ENCODE measurements at regions of chr7 and their contacts with region 1.

Region 1: DNA sequence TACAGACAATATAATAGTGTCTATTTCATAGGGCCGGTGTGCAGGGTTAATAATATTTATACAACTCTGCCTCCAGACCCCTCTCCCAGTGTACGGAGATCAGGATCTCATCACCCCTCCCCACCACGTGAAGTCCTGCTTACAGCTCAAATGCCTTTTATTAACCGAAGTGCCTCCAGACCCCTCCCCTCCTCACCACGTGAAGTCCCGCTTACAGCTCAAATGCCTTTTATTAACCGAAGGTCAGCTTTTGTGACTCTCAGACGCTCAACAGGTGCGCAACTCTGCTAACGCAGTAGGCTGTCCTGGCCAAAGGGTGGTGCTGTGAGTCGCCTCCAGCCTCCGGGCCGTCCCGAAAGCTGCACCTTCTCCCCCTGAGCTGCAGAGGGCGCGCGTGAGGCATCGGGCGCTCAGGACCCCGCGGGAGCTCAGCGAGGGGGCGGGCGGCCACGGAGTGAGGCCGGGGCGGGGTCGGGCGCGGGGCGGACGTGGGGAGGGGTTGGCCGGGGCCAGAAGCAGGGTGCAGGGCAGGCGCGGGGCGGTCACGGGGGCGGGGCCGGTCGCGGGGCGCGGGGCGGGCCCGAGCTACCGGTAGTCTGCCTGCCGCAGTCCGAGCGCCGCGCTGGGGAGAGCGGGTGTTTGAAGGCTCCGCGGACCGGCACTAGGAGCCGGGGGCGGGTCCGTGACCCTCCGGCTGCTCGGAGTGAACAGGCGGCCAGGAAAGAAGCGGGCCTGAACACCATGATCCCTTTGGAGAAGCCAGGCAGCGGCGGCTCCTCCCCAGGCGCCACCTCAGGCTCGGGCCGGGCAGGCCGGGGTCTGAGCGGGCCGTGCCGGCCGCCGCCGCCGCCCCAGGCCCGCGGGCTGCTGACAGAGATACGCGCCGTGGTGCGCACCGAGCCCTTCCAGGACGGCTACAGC is at the start of gene STK17A:
- DNase-seq: peak; percentile 93
- ATAC-seq: peak; percentile 85
- H3K4me3 Mint-ChIP-seq: peak within 1 kb of the TSS; percentile 93
- H3K27ac Mint-ChIP-seq: peak within 1 kb of the TSS; percentile 93
- H3K4me1 Mint-ChIP-seq: peaks cover 15% of the 10 kb centered on the region
- H3K27me3 Mint-ChIP-seq: peaks cover 2% of the 10 kb centered on the region
- CTCF ChIP-seq: peak; percentile 98
- total RNA-seq, gene STK17A: 42.4 to 46.1 TPM

Region 2: DNA sequence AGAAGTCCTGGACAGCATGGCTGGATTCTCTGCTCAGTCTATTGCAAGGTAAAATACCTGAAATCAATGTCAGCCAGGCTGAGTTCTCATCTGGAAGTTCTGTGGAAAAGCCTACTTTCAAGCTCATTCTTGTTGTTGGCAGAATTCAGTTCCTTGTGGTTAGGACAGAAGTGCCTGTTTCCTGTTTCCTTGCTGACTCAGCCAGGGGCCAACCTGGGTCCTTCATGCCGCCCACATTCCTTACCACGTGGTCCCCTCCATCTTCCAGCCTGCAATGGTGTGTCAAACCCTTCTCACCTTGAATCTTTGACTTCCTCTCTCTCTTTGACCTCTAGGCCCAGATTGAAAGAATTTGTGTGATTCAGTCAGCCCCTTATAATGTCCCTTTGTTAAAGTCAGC is 196.9 kb before region 1 on chr7:
- CTCF ChIA-PET with region 1: no interaction called
- POLR2A ChIA-PET with region 1: no interaction called
- intact Hi-C with region 1: no loop called
- DNase-seq: peak; percentile 63
- ATAC-seq: peak; percentile 65
- H3K4me3 Mint-ChIP-seq: no peak overlapping the region
- H3K27ac Mint-ChIP-seq: no peak overlapping the region
- H3K4me1 Mint-ChIP-seq: peaks cover 8% of the 10 kb centered on the region
- H3K27me3 Mint-ChIP-seq: peaks cover 23% of the 10 kb centered on the region
- CTCF ChIP-seq: no peak

Region 3: GRCh38 chr7:43618073-43618472 is 35.3 kb after region 1 on chr7:
- CTCF ChIA-PET with region 1: interaction called, 123 read pairs
- POLR2A ChIA-PET with region 1: interaction called, 21 read pairs
- intact Hi-C with region 1: loop called (anchors 5 kb)
- DNase-seq: no peak
- ATAC-seq: no peak
- H3K4me3 Mint-ChIP-seq: no peak overlapping the region
- H3K27ac Mint-ChIP-seq: no peak overlapping the region
- H3K4me1 Mint-ChIP-seq: peaks cover 51% of the 10 kb centered on the region
- H3K27me3 Mint-ChIP-seq: no peaks in the 10 kb centered on the region
- CTCF ChIP-seq: no peak

Region 4: DNA sequence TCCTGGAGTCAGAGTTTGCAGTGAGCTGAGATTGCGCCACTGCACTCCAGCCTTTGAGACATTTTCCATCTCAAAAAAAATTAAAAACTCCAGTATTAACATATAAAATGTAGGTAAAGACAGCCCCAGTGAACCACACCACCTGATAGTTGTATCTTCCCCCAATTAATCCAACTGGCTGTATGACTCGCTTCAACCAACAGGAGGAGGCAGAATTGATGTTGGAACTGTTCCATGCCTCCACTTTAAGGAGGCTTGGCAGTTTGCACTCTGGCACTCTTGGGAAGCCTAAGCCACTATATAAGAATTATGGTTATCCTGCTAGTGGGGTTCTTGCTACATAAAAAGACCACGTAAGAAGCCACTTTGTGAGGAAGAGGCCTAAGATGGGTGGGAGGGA is 72.8 kb after region 1 on chr7:
- CTCF ChIA-PET with region 1: interaction called, 173 read pairs
- POLR2A ChIA-PET with region 1: interaction called, 159 read pairs
- intact Hi-C with region 1: no loop called
- DNase-seq: no peak
- ATAC-seq: no peak
- H3K4me3 Mint-ChIP-seq: no peak overlapping the region
- H3K27ac Mint-ChIP-seq: peak overlapping the region; percentile 20
- H3K4me1 Mint-ChIP-seq: peaks cover 74% of the 10 kb centered on the region
- H3K27me3 Mint-ChIP-seq: no peaks in the 10 kb centered on the region
- CTCF ChIP-seq: no peak

Region 5: GRCh38 chr7:43693687-43694398 is 111.1 kb after region 1 on chr7:
- CTCF ChIA-PET with region 1: interaction called, 452 read pairs
- POLR2A ChIA-PET with region 1: interaction called, 63 read pairs
- intact Hi-C with region 1: loop called (anchors 1 kb)
- DNase-seq: no peak
- ATAC-seq: no peak
- H3K4me3 Mint-ChIP-seq: no peak overlapping the region
- H3K27ac Mint-ChIP-seq: no peak overlapping the region
- H3K4me1 Mint-ChIP-seq: peaks cover 39% of the 10 kb centered on the region
- H3K27me3 Mint-ChIP-seq: no peaks in the 10 kb centered on the region
- CTCF ChIP-seq: no peak

Region 6: DNA sequence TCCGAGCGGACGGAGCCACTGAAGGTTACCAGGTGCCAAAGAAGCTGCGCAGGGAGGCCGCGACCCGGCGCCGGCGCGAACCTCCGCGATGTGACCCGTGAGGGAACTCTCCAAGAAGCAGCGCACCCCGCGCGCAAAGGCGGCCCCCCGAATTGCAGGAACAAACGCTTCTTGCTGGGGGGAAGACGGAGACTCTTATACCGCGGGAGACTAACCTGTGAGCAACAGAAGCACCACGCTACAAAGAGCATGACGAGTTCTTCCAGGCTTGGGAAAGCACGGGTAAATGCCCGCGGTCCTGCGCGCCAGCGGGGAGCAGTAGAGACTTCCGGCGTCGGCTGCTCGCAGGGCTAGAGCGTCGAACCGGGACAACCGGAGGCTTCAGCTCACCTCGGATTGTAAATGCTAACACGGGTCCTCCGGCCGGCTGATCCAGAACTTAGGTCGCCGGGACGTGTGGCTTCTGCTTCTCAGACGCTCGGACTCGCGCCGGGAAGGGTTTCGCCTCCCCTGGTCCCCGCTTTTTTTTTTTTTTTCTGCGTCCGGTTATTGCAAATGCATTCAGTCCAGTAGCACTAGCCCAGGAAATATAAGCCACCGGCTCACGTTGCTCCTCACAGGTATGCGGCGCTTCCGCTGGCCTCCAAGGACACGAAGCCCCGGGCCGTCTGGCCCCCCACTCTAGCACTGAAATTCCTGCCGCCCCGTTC is 146.6 kb after region 1 on chr7 and contains the start of gene COA1:
- CTCF ChIA-PET with region 1: interaction called, 52 read pairs
- POLR2A ChIA-PET with region 1: interaction called, 3 read pairs
- intact Hi-C with region 1: loop called (anchors 5 kb)
- DNase-seq: peak; percentile 85
- ATAC-seq: peak; percentile 92
- H3K4me3 Mint-ChIP-seq: peak within 1 kb of the TSS; percentile 94
- H3K27ac Mint-ChIP-seq: peak within 1 kb of the TSS; percentile 91
- H3K4me1 Mint-ChIP-seq: peaks cover 33% of the 10 kb centered on the region
- H3K27me3 Mint-ChIP-seq: peaks cover 2% of the 10 kb centered on the region
- CTCF ChIP-seq: peak; percentile 26
- total RNA-seq, gene COA1: 78.8 to 85.6 TPM

Region 7: DNA sequence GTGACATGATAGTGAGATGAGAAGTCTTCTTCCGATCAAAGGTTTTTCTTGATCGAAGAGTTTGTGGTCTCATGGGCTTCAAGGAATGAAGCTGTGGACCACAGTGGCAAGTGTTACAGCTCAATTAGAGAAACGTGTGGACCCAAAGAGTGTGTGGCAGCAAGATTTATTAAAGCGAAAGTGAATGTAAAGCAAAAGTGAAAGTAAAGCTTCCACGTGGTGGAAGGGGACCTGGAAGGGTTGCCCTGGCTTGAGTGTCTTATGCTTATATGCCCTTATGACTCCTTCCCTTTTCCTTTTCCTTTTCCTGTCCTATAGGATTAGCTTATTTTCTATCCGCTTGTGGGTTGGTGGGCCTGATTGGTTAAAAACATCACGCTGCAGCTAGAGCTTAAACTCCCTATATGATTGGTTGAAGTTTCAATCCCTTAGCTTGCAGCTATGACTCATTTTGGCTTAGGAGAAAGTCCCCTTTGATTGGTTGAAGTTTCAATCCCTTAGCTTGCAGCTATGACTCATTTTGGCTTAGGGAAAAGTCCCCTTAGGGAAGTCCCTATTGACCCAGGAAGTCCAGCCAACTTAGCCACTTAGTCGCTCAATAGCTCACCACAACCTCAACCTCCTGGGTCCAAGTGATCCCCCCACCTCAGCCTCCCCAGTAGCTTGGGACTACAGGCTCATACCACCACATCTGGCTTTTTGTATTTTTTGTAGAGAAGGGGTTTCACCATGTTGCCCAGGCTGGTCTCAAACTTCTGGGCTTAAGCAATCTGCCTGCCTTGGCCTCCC is 251.9 kb after region 1 on chr7:
- CTCF ChIA-PET with region 1: interaction called, 150 read pairs
- POLR2A ChIA-PET with region 1: interaction called, 7 read pairs
- intact Hi-C with region 1: loop called (anchors 2 kb)
- DNase-seq: peak; percentile 62
- ATAC-seq: peak; percentile 63
- H3K4me3 Mint-ChIP-seq: peak overlapping the region; percentile 75
- H3K27ac Mint-ChIP-seq: peak overlapping the region; percentile 94
- H3K4me1 Mint-ChIP-seq: peaks cover 32% of the 10 kb centered on the region
- H3K27me3 Mint-ChIP-seq: peaks cover 2% of the 10 kb centered on the region
- CTCF ChIP-seq: no peak

Measured in activated CD8-positive, alpha-beta T cell treated with anti-CD3 and anti-CD28 coated beads for 36 hours (primary cell).